SK-N-SH (cell line): ENCODE measurements at regions of chr17 and their contacts with region 1.

Region 1: GRCh38 chr17:81440876-81441244 is 45.6 kb downstream of the BAHCC1 start:
- DNase-seq: peak; percentile 98
- H3K4me3 ChIP-seq: no peak overlapping the region; a peak in 1 of 4 replicates
- H3K27ac ChIP-seq: no peak overlapping the region
- H3K4me1 ChIP-seq: peaks cover 0 to 29% of the 10 kb centered on the region in 2 experiments; a peak in 1 of 4 replicates
- H3K27me3 ChIP-seq: no peaks in the 10 kb centered on the region
- CTCF ChIP-seq: peak; percentile 81
- EP300 ChIP-seq: no peak
- RAD21 ChIP-seq: peak; percentile 77

Region 2: GRCh38 chr17:81294856-81295680 is 145.8 kb before region 1 on chr17 and contains the start of gene SLC38A10:
- CTCF ChIA-PET with region 1: interaction called, 15 read pairs
- POLR2A ChIA-PET with region 1: no interaction called
- DNase-seq: peak; percentile 100
- H3K4me3 ChIP-seq: peak within 1 kb of the TSS; percentile 76 to 88
- H3K27ac ChIP-seq: peak within 1 kb of the TSS; percentile 77 to 87
- H3K4me1 ChIP-seq: peaks cover 8 to 27% of the 10 kb centered on the region in 2 experiments; a peak in 2 of 4 replicates
- H3K27me3 ChIP-seq: no peaks in the 10 kb centered on the region
- CTCF ChIP-seq: peak; percentile 34; the same call in 1 of the 2 replicates
- EP300 ChIP-seq: peak in 1 of 2 experiments; percentile 30; a peak in 1 of 4 replicates
- RAD21 ChIP-seq: no peak
- polyA plus RNA-seq, gene SLC38A10: 64.3 and 82.2 TPM in 2 replicates

Region 3: DNA sequence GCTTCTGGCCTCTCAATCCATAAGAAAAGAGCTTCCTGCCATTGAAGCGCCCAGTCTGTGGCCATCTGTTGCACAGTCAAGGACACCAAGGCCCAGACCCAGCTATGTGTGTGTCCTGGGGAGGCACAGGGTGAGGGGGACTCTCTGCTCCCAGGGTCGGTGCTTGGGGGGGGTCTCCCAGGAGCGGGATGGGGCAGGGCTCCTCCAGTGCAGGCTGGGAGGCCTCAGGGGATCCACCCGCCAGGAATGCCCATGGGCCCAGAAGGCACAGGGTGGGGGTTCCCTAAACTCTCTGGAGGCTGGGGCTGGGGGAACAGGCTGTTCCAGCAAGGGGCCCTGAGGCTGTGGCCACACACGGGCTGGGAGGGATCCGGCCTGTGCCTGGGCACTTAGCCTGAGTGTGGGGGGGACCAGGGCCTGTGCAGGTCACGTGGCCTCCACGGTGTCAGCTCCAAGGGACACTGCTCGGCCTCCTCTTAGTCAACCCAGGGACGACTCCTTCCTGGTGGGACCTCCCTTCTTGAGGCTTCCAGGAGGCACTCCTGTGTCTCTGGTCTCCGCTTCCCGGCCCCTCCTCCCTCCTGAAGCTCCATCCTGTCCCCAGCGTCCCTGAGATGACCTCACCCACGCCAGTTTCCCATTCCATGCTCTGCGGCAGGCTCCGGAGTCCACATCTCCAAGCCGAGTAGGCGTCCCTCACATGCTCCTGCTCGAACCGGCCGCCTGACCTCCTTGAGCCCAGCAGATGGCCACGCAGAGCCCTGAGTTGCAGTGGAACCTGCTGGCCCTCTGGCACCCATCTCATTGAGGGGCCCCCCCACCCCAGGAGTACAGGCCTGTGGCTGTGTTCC is 68.7 kb before region 1 on chr17:
- CTCF ChIA-PET with region 1: interaction called, 10 read pairs
- POLR2A ChIA-PET with region 1: no interaction called
- DNase-seq: peak; percentile 91
- H3K4me3 ChIP-seq: no peak overlapping the region
- H3K27ac ChIP-seq: no peak overlapping the region
- H3K4me1 ChIP-seq: peaks cover 0 to 4% of the 10 kb centered on the region in 2 experiments; a peak in 1 of 4 replicates
- H3K27me3 ChIP-seq: peaks cover 16% of the 10 kb centered on the region; the same call in 1 of the 2 replicates
- CTCF ChIP-seq: peak; percentile 69
- EP300 ChIP-seq: no peak
- RAD21 ChIP-seq: peak; percentile 77

Region 4: DNA sequence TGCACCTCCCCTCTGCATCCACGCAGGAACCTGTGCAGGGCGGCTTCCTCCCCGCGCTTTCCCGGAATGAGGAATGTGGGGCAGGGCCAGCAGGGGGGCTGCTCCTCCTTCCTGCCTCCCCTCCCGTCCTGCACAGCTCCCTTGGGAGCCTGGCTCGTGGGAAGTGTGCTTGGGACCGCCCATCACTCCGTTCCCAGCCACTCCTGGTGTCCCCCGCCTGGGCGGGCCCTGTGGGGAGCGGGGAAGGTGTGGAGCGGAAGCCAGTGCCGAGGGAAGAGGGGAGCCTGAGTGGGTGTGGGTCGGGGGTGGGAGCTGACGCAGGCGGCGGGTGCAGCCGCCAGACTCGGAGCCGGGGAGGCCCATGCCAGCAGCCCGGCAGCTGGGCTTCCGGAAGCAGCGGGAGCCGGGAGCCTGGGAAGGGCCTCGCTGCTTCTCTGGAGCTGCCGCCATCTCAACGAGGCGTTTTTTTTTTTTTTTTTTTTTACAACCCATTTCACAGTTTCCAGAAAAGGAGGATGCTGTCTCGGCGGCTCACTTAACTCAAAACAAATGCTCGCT is 21.5 kb before region 1 on chr17:
- CTCF ChIA-PET with region 1: interaction called, 14 read pairs
- POLR2A ChIA-PET with region 1: interaction called, 4 read pairs
- DNase-seq: peak; percentile 95
- H3K4me3 ChIP-seq: peak overlapping the region; percentile 28
- H3K27ac ChIP-seq: peak overlapping the region; percentile 78 to 100
- H3K4me1 ChIP-seq: peaks cover 62 to 71% of the 10 kb centered on the region in 2 experiments; a peak in 3 of 4 replicates
- H3K27me3 ChIP-seq: no peaks in the 10 kb centered on the region
- CTCF ChIP-seq: no peak
- EP300 ChIP-seq: no peak; a peak in 1 of 4 replicates
- RAD21 ChIP-seq: no peak

Region 5: DNA sequence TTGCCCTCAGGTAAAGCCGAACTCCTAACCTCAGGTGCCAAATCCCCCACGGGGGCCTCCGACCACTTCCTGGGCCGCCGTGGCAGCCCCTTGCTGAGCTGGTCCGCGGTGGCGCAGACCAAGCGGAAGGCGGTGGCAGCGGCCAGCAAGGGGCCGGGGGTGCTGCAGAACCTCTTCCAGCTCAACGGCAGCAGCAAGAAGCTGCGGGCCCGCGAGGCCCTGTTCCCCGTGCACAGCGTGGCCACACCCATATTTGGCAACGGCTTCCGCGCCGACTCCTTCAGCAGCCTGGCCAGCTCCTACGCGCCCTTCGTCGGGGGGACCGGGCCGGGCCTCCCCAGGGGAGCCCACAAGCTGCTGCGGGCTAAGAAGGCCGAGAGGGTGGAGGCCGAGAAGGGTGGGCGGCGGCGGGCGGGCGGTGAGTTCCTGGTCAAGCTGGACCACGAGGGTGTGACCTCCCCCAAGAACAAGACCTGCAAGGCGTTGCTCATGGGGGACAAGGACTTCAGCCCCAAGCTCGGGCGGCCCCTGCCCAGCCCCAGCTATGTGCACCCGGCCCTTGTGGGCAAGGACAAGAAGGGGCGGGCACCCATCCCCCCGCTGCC is 20.1 kb after region 1 on chr17:
- CTCF ChIA-PET with region 1: interaction called, 85 read pairs
- POLR2A ChIA-PET with region 1: no interaction called
- DNase-seq: no peak
- H3K4me3 ChIP-seq: no peak overlapping the region
- H3K27ac ChIP-seq: no peak overlapping the region
- H3K4me1 ChIP-seq: peaks cover 0 to 10% of the 10 kb centered on the region in 2 experiments; a peak in 1 of 4 replicates
- H3K27me3 ChIP-seq: no peaks in the 10 kb centered on the region
- CTCF ChIP-seq: no peak
- EP300 ChIP-seq: no peak
- RAD21 ChIP-seq: no peak

Region 6: GRCh38 chr17:81502471-81503017 is 61.7 kb after region 1 on chr17:
- CTCF ChIA-PET with region 1: no interaction called
- POLR2A ChIA-PET with region 1: no interaction called
- DNase-seq: no peak
- H3K4me3 ChIP-seq: no peak overlapping the region
- H3K27ac ChIP-seq: no peak overlapping the region
- H3K4me1 ChIP-seq: no peaks in the 10 kb centered on the region
- H3K27me3 ChIP-seq: no peaks in the 10 kb centered on the region
- CTCF ChIP-seq: no peak
- EP300 ChIP-seq: no peak
- RAD21 ChIP-seq: no peak

Region 7: GRCh38 chr17:81601525-81602120 is 160.8 kb after region 1 on chr17:
- CTCF ChIA-PET with region 1: interaction called, 15 read pairs
- POLR2A ChIA-PET with region 1: interaction called, 3 read pairs
- DNase-seq: peak; percentile 87
- H3K4me3 ChIP-seq: no peak overlapping the region
- H3K27ac ChIP-seq: peak overlapping the region in 1 of 2 experiments; percentile 31; a peak in 1 of 4 replicates
- H3K4me1 ChIP-seq: peaks cover 2 to 20% of the 10 kb centered on the region in 2 experiments
- H3K27me3 ChIP-seq: no peaks in the 10 kb centered on the region
- CTCF ChIP-seq: peak; percentile 98
- EP300 ChIP-seq: no peak
- RAD21 ChIP-seq: peak; percentile 92

Region 8: GRCh38 chr17:81636505-81637288 is 195.8 kb after region 1 on chr17 and contains the starts of genes NPLOC4 and TSPAN10:
- CTCF ChIA-PET with region 1: no interaction called
- POLR2A ChIA-PET with region 1: no interaction called
- DNase-seq: peak; percentile 100
- H3K4me3 ChIP-seq: peak within 1 kb of the TSS; percentile 65 to 79
- H3K27ac ChIP-seq: peak within 1 kb of the TSS; percentile 67 to 92
- H3K4me1 ChIP-seq: peaks cover 7 to 17% of the 10 kb centered on the region in 2 experiments; a peak in 3 of 4 replicates
- H3K27me3 ChIP-seq: no peaks in the 10 kb centered on the region
- CTCF ChIP-seq: no peak
- EP300 ChIP-seq: 0 out of 4 replicates have a peak, but pooled peaks have one; percentile 5 to 52
- RAD21 ChIP-seq: no peak; the same call in 1 of the 2 replicates
- polyA plus RNA-seq, gene NPLOC4: 88.6 and 105 TPM in 2 replicates
- polyA plus RNA-seq, gene TSPAN10: 4.7 and 6.0 TPM in 2 replicates